CD8-positive, alpha-beta T cell (primary cell): ENCODE measurements at regions of chr1 and their contacts with region 1.

Region 1: DNA sequence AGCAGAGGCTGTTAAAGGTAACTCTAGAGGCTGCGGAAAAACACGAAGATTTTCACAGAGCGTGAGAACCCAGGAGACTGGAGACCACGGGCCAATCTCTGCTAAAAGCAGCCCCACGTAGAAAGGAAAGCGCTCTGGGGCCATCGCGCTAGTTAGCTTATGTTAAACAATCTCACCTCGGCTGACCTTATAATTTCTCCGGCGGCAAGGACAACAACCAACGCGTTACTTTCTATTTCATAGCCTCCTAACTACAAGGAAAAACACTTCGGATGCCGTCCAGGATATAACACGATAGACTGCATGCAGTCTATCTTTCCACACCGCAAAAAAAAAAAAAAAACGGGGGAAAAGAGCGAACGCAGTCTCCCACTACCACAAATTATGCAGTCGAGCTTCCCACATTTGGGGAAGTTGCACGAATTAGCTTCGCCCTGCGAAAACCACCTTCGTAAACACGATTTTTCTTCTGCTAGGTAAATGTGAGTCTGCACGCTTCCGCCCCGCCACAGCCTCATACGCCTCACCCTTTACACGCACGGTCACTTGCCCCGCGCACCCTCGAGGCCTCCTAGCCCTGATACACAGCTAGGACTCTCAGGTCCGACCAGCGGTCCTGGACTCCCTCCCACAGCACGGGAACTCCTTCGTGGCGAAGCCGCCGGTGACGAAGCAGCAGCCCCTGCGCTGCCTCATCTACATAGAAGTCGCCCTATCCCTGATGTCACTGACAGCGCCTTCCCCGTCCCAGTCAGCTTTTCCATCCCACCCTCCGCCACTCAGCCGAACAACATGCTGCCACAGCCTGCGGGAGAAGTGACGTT is 87.8 kb downstream of the PRKAB2 start:
- DNase-seq: peak; percentile 18 to 84 (median 67)
- ATAC-seq: peak; percentile 81
- H3K4me3 ChIP-seq: peak overlapping the region; percentile 67 to 74
- H3K4me3 Mint-ChIP-seq: peak overlapping the region; percentile 94
- H3K27ac ChIP-seq: peak overlapping the region; percentile 77 to 82
- H3K27ac Mint-ChIP-seq: peak overlapping the region; percentile 100
- H3K4me1 ChIP-seq: peaks cover 21% of the 10 kb centered on the region
- H3K4me1 Mint-ChIP-seq: peaks cover 34% of the 10 kb centered on the region
- H3K27me3 ChIP-seq: peaks cover 19 to 22% of the 10 kb centered on the region in 2 experiments
- H3K27me3 Mint-ChIP-seq: peaks cover 35% of the 10 kb centered on the region
- CTCF ChIP-seq: no peak

Region 2: DNA sequence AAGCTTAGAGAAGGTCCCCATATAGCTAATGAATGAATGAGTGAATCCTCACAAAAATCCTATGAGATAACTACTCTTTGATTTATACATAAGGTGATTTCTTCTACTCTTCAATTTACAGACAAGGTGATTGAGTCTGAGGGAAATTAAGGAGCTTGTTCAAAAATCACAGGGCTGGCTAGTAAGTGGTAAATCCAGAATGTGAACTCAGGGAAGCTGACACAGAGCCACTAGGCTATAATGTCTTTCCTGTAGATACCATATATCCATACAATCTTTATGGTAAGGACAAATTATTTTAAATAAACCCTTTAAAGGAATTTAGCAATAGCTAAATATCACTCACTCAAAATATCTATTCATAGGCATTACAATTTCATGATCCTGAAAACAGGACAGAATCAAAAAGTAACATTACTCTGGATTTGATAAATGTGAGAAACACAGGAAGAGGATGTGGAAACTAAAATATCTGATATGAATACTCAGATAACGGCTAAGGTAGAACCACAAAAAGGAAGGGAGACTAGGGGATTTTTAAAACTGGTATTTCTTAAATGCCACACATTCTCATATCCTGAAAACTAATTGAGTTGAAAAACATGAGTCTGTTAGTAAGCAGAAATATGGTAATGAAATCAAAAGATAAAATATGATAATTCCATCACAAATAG is 38.2 kb before region 1 on chr1:
- CTCF ChIA-PET with region 1: no interaction called
- POLR2A ChIA-PET with region 1: interaction called, 10 read pairs
- intact Hi-C with region 1: no loop called
- DNase-seq: peak in 1 of 9 experiments; percentile 15
- ATAC-seq: no peak
- H3K4me3 ChIP-seq: no peak overlapping the region
- H3K4me3 Mint-ChIP-seq: peak overlapping the region; percentile 54
- H3K27ac ChIP-seq: no peak overlapping the region
- H3K27ac Mint-ChIP-seq: peak overlapping the region; percentile 85
- H3K4me1 ChIP-seq: peaks cover 13% of the 10 kb centered on the region
- H3K4me1 Mint-ChIP-seq: peaks cover 33% of the 10 kb centered on the region
- H3K27me3 ChIP-seq: no peaks in the 10 kb centered on the region
- H3K27me3 Mint-ChIP-seq: no peaks in the 10 kb centered on the region
- CTCF ChIP-seq: no peak

Region 3: GRCh38 chr1:147109041-147109440 is 24.6 kb after region 1 on chr1:
- CTCF ChIA-PET with region 1: no interaction called
- POLR2A ChIA-PET with region 1: no interaction called
- intact Hi-C with region 1: no loop called
- DNase-seq: no peak
- ATAC-seq: no peak
- H3K4me3 ChIP-seq: no peak overlapping the region
- H3K4me3 Mint-ChIP-seq: no peak overlapping the region
- H3K27ac ChIP-seq: no peak overlapping the region
- H3K27ac Mint-ChIP-seq: no peak overlapping the region
- H3K4me1 ChIP-seq: no peaks in the 10 kb centered on the region
- H3K4me1 Mint-ChIP-seq: no peaks in the 10 kb centered on the region
- H3K27me3 ChIP-seq: peaks cover 0 to 4% of the 10 kb centered on the region in 2 experiments
- H3K27me3 Mint-ChIP-seq: peaks cover 16% of the 10 kb centered on the region
- CTCF ChIP-seq: no peak

Region 4: DNA sequence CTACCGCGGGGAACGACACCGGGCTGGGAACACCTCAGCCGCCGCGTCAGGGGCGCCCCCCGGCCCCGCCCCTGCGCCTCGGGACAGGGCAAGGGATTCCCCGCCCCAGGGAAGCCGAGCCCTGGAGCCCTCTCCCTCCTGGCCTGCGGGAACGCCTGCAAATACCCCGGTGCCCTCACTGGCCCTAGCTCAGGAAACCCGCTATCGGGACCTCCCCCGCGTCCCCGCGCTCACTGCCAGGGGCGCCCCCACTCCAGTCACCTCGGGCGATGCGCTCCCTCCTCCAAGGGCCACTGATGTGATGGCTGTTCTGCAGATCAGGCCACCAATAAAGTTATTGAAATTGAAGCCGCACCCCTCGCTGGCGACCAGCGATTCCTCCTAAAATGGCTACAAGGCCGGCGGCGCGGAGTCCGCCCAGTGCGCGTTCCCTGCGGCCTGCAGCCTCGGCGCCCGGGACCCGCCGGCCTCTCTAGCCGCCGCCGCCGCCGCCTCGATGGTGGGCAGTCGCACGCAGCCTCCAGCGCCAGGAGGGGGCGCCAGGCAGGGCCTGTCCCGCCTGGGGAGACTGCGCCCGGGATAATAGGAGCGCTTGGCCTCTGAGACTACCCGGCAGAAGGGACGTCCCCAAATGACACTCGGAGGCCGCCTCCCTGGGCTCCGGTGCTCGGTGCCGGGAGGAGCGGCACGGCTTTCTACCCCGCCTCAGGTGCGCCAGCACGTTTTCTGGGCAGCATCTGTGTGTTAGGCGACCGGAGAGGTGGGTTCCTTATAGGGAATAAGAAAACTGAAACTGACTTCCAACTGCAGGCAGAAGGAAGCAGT is 87.9 kb after region 1 on chr1 and contains the start of gene PRKAB2:
- CTCF ChIA-PET with region 1: no interaction called
- POLR2A ChIA-PET with region 1: no interaction called
- intact Hi-C with region 1: loop called (anchors 2 to 5 kb)
- DNase-seq: peak; percentile 74 to 94 (median 88)
- ATAC-seq: peak; percentile 79
- H3K4me3 ChIP-seq: peak within 1 kb of the TSS; percentile 85 to 96
- H3K4me3 Mint-ChIP-seq: peak within 1 kb of the TSS; percentile 96
- H3K27ac ChIP-seq: peak within 1 kb of the TSS; percentile 57 to 85
- H3K27ac Mint-ChIP-seq: peak within 1 kb of the TSS; percentile 95
- H3K4me1 ChIP-seq: peaks cover 16% of the 10 kb centered on the region
- H3K4me1 Mint-ChIP-seq: peaks cover 49% of the 10 kb centered on the region
- H3K27me3 ChIP-seq: no peaks in the 10 kb centered on the region
- H3K27me3 Mint-ChIP-seq: no peaks in the 10 kb centered on the region
- CTCF ChIP-seq: peak; percentile 83
- total RNA-seq, gene PRKAB2: 5.2 to 5.8 TPM

Region 5: GRCh38 chr1:147515046-147515869 is 430.8 kb after region 1 on chr1:
- CTCF ChIA-PET with region 1: no interaction called
- POLR2A ChIA-PET with region 1: no interaction called
- intact Hi-C with region 1: no loop called
- DNase-seq: peak in 2 of 9 experiments; percentile 47 to 60
- ATAC-seq: peak; percentile 65
- H3K4me3 ChIP-seq: no peak overlapping the region
- H3K4me3 Mint-ChIP-seq: no peak overlapping the region
- H3K27ac ChIP-seq: no peak overlapping the region
- H3K27ac Mint-ChIP-seq: no peak overlapping the region
- H3K4me1 ChIP-seq: no peaks in the 10 kb centered on the region
- H3K4me1 Mint-ChIP-seq: peaks cover 4% of the 10 kb centered on the region
- H3K27me3 ChIP-seq: no peaks in the 10 kb centered on the region
- H3K27me3 Mint-ChIP-seq: peaks cover 9% of the 10 kb centered on the region
- CTCF ChIP-seq: peak; percentile 33